Activated CD4-positive, alpha-beta memory T cell treated with anti-CD3 and anti-CD28 coated beads for 36 hours (primary cell): ENCODE measurements at regions of chr15 and their contacts with region 1.

Region 1: GRCh38 chr15:77907824-77908751 is 169.4 kb downstream of the TBC1D2B start:
- DNase-seq: peak; percentile 80
- H3K4me3 Mint-ChIP-seq: no peak overlapping the region
- H3K27ac Mint-ChIP-seq: no peak overlapping the region
- H3K4me1 Mint-ChIP-seq: peaks cover 2% of the 10 kb centered on the region
- H3K27me3 Mint-ChIP-seq: peaks cover 16% of the 10 kb centered on the region

Region 2: DNA sequence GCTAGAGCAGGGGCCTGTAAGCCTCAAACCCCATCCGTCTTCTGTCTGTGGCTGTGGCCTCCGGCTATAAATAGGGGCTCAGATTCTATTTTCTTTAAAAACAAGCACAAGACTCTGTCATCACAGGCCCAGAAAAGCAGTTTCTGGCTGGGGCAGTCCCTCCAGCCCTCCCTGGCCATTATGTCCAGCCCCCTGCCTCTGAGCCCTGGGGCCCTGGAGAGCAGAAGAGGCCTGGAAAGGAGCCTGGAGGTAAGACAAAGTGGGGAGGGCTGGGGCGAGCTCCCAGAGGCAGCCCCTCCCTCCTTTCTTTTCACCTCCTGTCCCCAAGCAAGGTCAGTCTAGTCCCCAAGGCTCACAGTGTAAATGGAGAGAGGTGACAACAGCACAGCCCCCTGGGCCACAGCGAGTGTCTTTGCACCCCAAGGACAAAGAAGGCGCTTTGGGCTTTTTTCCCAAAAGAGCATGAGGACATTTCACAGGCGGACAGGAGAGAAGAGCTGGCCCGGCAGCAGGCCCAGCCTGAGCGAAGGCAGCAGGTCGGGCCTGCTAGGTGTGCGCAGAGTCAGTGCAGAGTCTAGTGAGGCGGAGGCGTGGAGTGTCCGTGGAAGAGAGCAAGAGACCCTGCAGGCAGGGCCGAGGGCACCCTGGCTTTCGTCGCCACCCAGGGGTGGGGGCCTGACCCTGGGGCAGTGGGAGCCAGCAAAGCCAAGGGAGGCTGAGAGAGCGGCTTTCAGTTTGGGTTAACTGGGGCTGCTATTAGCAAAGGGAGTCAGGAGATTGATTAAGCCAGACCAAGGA is 18.9 kb before region 1 on chr15:
- CTCF ChIA-PET with region 1: no interaction called
- POLR2A ChIA-PET with region 1: no interaction called
- intact Hi-C with region 1: no loop called
- DNase-seq: no peak
- H3K4me3 Mint-ChIP-seq: no peak overlapping the region
- H3K27ac Mint-ChIP-seq: no peak overlapping the region
- H3K4me1 Mint-ChIP-seq: no peaks in the 10 kb centered on the region
- H3K27me3 Mint-ChIP-seq: no peaks in the 10 kb centered on the region

Region 3: DNA sequence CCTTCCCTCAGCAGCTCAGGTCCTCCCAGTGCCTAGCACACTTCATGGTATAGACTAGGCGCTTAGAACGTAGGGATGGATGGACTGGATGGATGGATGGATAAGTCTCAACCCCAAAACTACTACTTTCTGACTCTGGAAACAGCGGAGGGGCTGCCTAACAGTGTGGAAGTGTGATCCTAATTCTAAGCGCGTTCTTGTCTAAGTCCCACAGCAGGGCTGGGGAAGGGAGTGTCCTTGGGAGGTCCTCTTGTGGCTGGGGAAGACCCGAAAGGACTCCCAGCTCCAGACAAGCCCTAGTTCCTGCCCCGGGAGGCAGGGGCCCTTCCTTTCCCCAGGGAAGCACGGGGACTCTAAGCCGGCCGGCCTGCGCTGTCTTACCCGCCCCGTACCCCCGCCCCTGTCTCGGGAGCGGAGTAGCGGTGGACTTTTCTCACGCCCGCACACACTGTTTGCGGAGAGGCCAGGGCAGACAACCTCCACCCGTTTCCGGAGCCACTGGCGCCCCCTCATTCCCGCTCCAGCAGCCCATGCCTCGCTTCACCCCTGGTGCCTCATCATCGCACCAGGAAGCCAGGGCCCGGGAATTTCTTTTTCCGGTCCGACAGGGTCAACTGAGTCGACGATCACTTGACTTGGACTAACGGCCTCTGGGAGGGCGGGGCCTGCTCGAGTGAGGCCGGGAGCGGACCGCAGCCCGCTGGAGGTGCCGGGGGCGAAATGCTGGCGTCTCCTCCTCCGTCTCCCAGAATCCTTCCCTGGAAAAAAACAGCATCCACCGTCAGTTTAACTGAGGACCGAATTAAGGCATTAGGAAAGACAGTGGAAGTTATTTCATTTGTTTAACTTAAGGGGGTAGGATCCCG is 36.1 kb after region 1 on chr15:
- CTCF ChIA-PET with region 1: interaction called, 18 read pairs
- POLR2A ChIA-PET with region 1: no interaction called
- intact Hi-C with region 1: no loop called
- DNase-seq: peak; percentile 79
- H3K4me3 Mint-ChIP-seq: peak overlapping the region; percentile 65
- H3K27ac Mint-ChIP-seq: no peak overlapping the region
- H3K4me1 Mint-ChIP-seq: peaks cover 14% of the 10 kb centered on the region
- H3K27me3 Mint-ChIP-seq: peaks cover 2% of the 10 kb centered on the region

Region 4: DNA sequence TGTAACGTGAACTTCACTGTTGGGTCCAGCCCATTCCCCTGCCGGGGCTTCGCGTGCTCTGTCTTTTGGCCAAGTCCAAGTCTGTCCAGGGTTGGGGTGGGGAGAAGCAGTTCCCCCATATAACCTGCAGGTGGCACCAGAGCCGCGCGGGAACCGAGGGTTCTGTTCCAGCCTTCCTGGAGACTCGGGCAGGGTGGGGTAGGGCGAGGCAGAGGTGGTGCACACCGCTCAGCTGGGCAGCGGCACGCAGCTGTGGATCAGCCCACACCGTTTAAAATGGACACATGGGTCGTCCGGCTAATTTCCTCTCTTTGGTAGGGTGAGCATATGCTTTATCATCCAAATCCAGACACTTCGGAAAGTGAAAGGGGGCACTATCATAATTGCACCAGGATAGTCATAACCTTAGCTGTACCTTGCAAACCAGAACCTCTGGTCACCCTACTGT is 51.4 kb after region 1 on chr15:
- CTCF ChIA-PET with region 1: interaction called, 9 read pairs
- POLR2A ChIA-PET with region 1: no interaction called
- intact Hi-C with region 1: loop called (anchors 10 kb)
- DNase-seq: peak; percentile 87
- H3K4me3 Mint-ChIP-seq: peak overlapping the region; percentile 30
- H3K27ac Mint-ChIP-seq: no peak overlapping the region
- H3K4me1 Mint-ChIP-seq: peaks cover 7% of the 10 kb centered on the region
- H3K27me3 Mint-ChIP-seq: peaks cover 8% of the 10 kb centered on the region

Region 5: GRCh38 chr15:78739996-78740903 is 832.2 kb after region 1 on chr15:
- CTCF ChIA-PET with region 1: interaction called, 14 read pairs
- POLR2A ChIA-PET with region 1: no interaction called
- intact Hi-C with region 1: no loop called
- DNase-seq: peak; percentile 82
- H3K4me3 Mint-ChIP-seq: no peak overlapping the region
- H3K27ac Mint-ChIP-seq: no peak overlapping the region
- H3K4me1 Mint-ChIP-seq: peaks cover 3% of the 10 kb centered on the region
- H3K27me3 Mint-ChIP-seq: no peaks in the 10 kb centered on the region